ENCODE measurements at regions of chr1 and their contacts with region 1.

Region 1: GRCh38 chr1:209527993-209528392 is 55.5 kb upstream of the CAMK1G start:
- DNase-seq: no peak
- ATAC-seq: no peak
- H3K4me3 ChIP-seq: no peak overlapping the region
- H3K27ac ChIP-seq: no peak overlapping the region
- H3K4me1 ChIP-seq: no peaks in the 10 kb centered on the region
- H3K27me3 ChIP-seq: peaks cover 0 to 2% of the 10 kb centered on the region in 2 donors

Region 2: DNA sequence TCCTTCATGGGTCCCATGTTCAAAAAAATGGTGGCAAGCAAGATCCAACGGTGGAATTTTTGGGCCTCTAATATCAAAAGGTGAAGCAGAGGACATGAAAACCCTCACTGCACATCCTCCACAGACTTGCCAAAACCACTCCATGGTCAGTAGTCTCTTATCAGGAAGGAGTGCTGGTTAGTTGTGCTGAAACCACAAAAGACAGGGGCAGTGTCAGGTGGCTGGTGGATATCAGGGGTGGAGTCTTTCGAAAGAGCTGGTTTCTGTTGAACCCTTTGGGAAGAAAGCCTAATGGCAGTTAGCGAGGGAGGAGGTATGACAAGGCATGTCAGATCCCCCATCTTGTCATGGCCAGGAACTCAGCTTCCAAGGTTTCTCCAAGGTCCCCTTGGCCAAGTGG is 340.4 kb before region 1 on chr1:
- intact Hi-C with region 1: no loop called
- DNase-seq: no peak
- ATAC-seq: no peak
- H3K4me3 ChIP-seq: no peak overlapping the region
- H3K27ac ChIP-seq: no peak overlapping the region
- H3K4me1 ChIP-seq: no peaks in the 10 kb centered on the region
- H3K27me3 ChIP-seq: no peaks in the 10 kb centered on the region

Region 3: DNA sequence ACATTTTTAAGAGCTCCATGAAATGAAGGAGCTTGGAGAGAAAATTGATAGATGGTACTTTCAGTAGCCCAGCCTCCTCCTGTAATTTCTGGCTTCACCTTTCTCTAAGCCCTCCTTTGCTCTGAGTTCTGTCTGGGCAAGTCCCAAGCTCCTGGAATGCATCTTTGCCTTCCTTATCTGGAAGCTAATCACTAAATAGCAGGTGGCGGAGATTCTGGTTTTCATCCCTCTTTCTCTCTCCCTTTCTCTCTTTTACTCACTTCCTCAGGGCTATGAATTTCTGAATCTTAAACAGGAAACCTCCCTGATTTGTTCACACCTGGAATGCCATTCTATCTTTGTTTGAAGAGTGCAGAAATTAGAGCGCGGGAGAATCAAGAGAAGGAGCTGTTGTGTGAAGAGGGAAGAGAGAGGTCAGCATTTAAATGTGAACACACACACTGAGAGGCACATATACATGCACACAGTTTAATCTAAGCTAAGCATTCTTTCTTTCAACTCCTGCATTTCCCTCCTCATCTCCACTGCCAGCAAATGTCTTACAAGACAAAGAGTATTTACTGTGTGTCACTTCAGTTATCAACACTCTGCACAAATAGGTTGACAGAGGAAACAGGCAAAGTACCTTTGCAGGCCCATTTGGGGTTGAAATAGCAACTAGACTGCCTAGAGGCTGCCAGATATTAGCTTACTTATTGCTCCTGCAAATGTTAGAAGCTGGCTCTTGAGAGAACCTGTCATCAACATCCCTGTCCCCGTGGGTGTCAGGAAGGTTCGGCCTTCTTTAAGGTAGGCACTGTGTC is 143.9 kb before region 1 on chr1:
- intact Hi-C with region 1: no loop called
- DNase-seq: no peak
- ATAC-seq: no peak
- H3K4me3 ChIP-seq: no peak overlapping the region
- H3K27ac ChIP-seq: no peak overlapping the region
- H3K4me1 ChIP-seq: no peaks in the 10 kb centered on the region
- H3K27me3 ChIP-seq: peaks cover 0 to 2% of the 10 kb centered on the region in 2 donors

Region 4: DNA sequence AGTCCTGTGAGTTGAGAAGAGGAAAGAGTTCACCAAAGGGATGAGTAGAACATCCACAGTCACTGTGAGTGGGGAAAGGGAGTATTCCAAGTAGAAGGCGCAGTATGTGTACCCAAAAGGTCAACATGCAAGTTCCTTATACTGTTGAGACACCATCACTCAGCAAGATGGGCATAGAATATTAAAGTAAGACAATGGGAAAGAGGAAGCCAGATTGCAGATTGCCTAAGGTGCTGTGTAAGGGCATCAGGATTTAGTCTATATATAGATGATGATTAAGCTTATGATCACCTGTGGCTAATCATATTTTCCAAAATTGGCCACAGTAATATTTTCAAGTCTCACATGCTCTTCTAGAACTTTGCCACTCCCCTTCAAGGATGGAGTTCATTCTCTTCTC is 64.6 kb before region 1 on chr1:
- intact Hi-C with region 1: loop called in 1 of 2 experiments (anchors 10 kb)
- DNase-seq: no peak
- ATAC-seq: no peak
- H3K4me3 ChIP-seq: no peak overlapping the region
- H3K27ac ChIP-seq: no peak overlapping the region
- H3K4me1 ChIP-seq: no peaks in the 10 kb centered on the region
- H3K27me3 ChIP-seq: peaks cover 0 to 3% of the 10 kb centered on the region in 2 donors

Region 5: GRCh38 chr1:209565759-209566678 is 38.0 kb after region 1 on chr1:
- intact Hi-C with region 1: no loop called
- DNase-seq: peak; percentile 82 to 83
- ATAC-seq: peak; percentile 82
- H3K4me3 ChIP-seq: no peak overlapping the region
- H3K27ac ChIP-seq: no peak overlapping the region
- H3K4me1 ChIP-seq: no peaks in the 10 kb centered on the region
- H3K27me3 ChIP-seq: no peaks in the 10 kb centered on the region